ENCODE measurements at regions of chr4 and their contacts with region 1.

Region 1: GRCh38 chr4:53804719-53805118 is 213.4 kb upstream of the LNX1 start:
- DNase-seq: peak; percentile 73
- H3K4me3 Mint-ChIP-seq: no peak overlapping the region
- H3K27ac Mint-ChIP-seq: no peak overlapping the region
- H3K4me1 Mint-ChIP-seq: no peaks in the 10 kb centered on the region
- H3K27me3 Mint-ChIP-seq: no peaks in the 10 kb centered on the region

Region 2: DNA sequence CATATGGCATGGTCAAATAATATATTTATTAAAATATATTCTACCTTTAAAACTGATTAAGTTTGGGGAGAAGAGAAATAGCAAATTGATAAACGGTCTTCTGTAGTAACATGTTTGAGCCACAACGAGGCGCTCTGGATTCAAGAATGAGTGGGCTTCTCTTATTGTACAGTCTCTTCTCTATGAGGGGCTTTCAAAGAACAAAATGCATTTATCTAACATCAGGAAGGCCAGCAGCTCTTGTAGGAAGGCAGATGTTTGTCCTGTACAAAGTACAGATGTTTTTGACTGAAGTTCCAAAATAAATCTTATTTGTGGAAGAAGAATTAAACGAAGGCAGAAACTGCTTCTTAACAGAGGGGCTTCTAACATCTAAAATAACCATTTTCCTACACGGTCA is 789.0 kb before region 1 on chr4:
- intact Hi-C with region 1: loop called (anchors 10 kb)
- DNase-seq: no peak
- H3K4me3 Mint-ChIP-seq: no peak overlapping the region
- H3K27ac Mint-ChIP-seq: peak overlapping the region; percentile 21
- H3K4me1 Mint-ChIP-seq: peaks cover 25% of the 10 kb centered on the region
- H3K27me3 Mint-ChIP-seq: no peaks in the 10 kb centered on the region

Region 3: GRCh38 chr4:53490965-53491622 is 313.6 kb before region 1 on chr4:
- intact Hi-C with region 1: loop called (anchors 5 kb)
- DNase-seq: no peak
- H3K4me3 Mint-ChIP-seq: no peak overlapping the region
- H3K27ac Mint-ChIP-seq: no peak overlapping the region
- H3K4me1 Mint-ChIP-seq: no peaks in the 10 kb centered on the region
- H3K27me3 Mint-ChIP-seq: peaks cover 12% of the 10 kb centered on the region

Measured in activated CD4-positive, alpha-beta T cell treated with anti-CD3 and anti-CD28 coated beads, Interleukin-2, amount 10 ng/mL, durations not matched to agents 24 days and 14 days (primary cell).